ENCODE measurements at regions of chr20 and their contacts with region 1.

Region 1: GRCh38 chr20:35021063-35021462 is 65.4 kb downstream of the MYH7B start:
- DNase-seq: no peak
- ATAC-seq: peak in 7 of 8 donors; percentile 31 to 76 (median 63)
- H3K4me3 ChIP-seq: no peak overlapping the region
- H3K27ac ChIP-seq: peak overlapping the region; percentile 24 to 80 (median 53)
- H3K4me1 ChIP-seq: peaks cover 0 to 35% (median 9%) of the 10 kb centered on the region in 9 donors
- H3K27me3 ChIP-seq: no peaks in the 10 kb centered on the region
- CTCF ChIP-seq: no peak

Region 2: GRCh38 chr20:34977375-34978091 is 43.5 kb before region 1 on chr20:
- intact Hi-C with region 1: no loop called
- DNase-seq: peak; percentile 65 to 79
- ATAC-seq: peak; percentile 46 to 69 (median 60)
- H3K4me3 ChIP-seq: peak overlapping the region; percentile 33 to 65 (median 56)
- H3K27ac ChIP-seq: peak overlapping the region; percentile 76 to 98 (median 88)
- H3K4me1 ChIP-seq: peaks cover 0 to 36% (median 6%) of the 10 kb centered on the region in 9 donors
- H3K27me3 ChIP-seq: no peaks in the 10 kb centered on the region
- CTCF ChIP-seq: no peak

Region 3: DNA sequence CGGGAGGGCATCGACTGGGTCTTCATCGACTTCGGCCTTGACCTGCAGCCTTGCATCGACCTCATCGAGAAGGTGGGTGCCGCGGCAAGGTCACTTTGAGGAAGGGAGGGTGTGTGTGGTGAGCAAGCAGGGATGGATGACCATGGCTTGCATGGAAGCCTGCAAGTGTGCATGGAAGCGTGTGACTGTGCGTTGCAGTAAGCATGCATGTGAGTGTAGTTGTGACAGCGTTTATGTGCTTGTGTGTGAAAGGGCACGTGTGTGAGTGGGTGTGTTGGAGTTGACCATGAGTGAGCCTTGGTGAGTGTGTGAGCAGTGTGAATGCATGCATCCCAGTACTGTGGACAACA is 32.9 kb before region 1 on chr20:
- intact Hi-C with region 1: no loop called
- DNase-seq: no peak
- ATAC-seq: peak in 1 of 8 donors; percentile 2
- H3K4me3 ChIP-seq: peak overlapping the region in 1 of 10 donors; percentile 13
- H3K27ac ChIP-seq: peak overlapping the region in 3 of 10 donors; percentile 67 to 84 (median 69)
- H3K4me1 ChIP-seq: peaks cover 11 to 88% (median 44%) of the 10 kb centered on the region in 9 donors
- H3K27me3 ChIP-seq: peaks cover 0 to 17% (median 0%) of the 10 kb centered on the region in 7 donors
- CTCF ChIP-seq: no peak

Region 4: DNA sequence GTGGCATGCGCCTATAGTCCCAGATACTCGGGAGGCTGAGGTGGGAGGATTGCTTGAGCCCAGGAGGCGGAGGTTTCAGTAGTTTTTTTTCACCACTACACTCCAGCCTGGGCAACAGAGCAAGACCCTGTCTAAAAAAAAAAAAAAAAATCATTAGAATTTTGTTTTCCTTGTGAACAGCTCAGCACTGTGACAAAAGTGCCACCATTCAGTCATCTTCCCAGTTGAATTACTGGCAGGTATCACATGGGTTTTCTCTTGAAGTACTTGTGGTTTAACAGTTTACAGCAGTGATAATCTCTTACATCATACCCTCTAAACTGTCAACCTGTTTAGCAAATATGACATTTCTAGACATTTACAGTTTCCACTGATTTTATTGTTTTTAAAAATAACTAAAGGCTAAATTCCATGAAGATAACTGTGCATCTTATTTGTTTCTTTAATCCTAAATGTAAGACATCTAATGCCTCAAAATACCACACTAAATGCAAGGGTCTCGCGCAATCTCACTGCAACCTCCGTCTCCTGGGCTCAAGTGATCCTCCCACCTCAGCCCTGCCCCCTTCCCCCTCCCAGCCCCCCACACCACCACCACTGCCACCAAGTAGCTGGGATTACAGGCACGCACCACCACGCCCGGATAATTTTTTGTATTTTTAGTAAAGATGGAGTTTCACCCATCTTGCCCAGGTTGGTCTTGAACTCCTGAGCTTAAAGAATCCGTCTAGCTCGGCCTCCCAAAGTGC is 64.6 kb after region 1 on chr20:
- intact Hi-C with region 1: loop called in 1 of 10 experiments (anchors 10 kb)
- DNase-seq: no peak
- ATAC-seq: no peak
- H3K4me3 ChIP-seq: no peak overlapping the region
- H3K27ac ChIP-seq: peak overlapping the region in 1 of 10 donors; percentile 20
- H3K4me1 ChIP-seq: peaks cover 5 to 78% (median 49%) of the 10 kb centered on the region in 9 donors
- H3K27me3 ChIP-seq: no peaks in the 10 kb centered on the region
- CTCF ChIP-seq: no peak

Measured in heart right ventricle (tissue), 16 donors.